ENCODE measurements at regions of chr1 and their contacts with region 1.

Region 1: GRCh38 chr1:93692983-93693591 is 11.4 kb upstream of the BCAR3 start:
- DNase-seq: peak; percentile 78
- H3K4me3 Mint-ChIP-seq: peak overlapping the region; percentile 1
- H3K27ac Mint-ChIP-seq: peak overlapping the region; percentile 70
- H3K4me1 Mint-ChIP-seq: peaks cover 14% of the 10 kb centered on the region
- H3K27me3 Mint-ChIP-seq: peaks cover 4% of the 10 kb centered on the region

Region 2: DNA sequence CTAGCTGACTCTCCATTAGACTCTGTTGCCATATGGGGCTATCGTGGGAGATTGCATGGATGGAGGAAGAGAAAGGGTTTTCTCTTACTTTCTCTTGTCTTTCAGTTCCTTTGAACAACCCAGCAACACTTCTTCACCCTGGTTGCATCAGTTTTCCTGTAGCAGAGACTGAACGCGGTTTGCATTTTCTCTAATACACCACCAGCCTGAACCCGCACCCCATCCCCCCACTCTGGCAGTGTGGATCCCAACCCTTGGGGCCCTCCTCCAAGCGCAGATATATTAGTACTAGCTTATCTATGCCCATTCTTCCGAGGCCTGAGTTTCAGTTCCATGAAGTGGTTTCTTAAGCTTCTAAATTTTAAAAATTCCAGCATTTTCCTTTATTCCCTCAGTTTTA is 334.8 kb before region 1 on chr1:
- CTCF ChIA-PET with region 1: no interaction called
- POLR2A ChIA-PET with region 1: no interaction called
- intact Hi-C with region 1: no loop called
- DNase-seq: no peak
- H3K4me3 Mint-ChIP-seq: no peak overlapping the region
- H3K27ac Mint-ChIP-seq: peak overlapping the region; percentile 30
- H3K4me1 Mint-ChIP-seq: peaks cover 58% of the 10 kb centered on the region
- H3K27me3 Mint-ChIP-seq: no peaks in the 10 kb centered on the region

Region 3: DNA sequence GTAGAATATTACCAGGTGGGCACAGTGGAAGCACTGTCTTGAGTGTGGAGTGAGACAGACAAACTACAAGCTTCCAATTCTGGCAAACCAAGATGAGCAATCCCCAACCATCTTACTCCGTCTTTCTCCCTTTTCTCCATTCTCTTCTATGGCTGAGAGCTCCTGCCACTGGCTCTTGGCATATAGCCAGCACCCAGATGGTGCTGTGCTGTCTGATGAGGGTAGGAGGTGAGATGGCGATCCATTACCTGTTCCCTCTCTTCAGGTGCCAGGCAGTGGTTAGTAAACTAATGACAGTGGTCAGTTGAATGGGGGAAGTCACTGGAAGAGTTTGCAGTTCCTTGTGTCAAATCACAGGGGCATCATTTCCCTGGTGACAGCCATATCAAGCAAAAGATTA is 136.8 kb before region 1 on chr1:
- CTCF ChIA-PET with region 1: no interaction called
- POLR2A ChIA-PET with region 1: no interaction called
- intact Hi-C with region 1: no loop called
- DNase-seq: no peak
- H3K4me3 Mint-ChIP-seq: no peak overlapping the region
- H3K27ac Mint-ChIP-seq: no peak overlapping the region
- H3K4me1 Mint-ChIP-seq: peaks cover 7% of the 10 kb centered on the region
- H3K27me3 Mint-ChIP-seq: peaks cover 4% of the 10 kb centered on the region

Region 4: GRCh38 chr1:93607814-93608186 is 85.3 kb before region 1 on chr1:
- CTCF ChIA-PET with region 1: no interaction called
- POLR2A ChIA-PET with region 1: interaction called, 3 read pairs
- intact Hi-C with region 1: loop called (anchors 1 kb)
- DNase-seq: peak; percentile 85
- H3K4me3 Mint-ChIP-seq: no peak overlapping the region
- H3K27ac Mint-ChIP-seq: peak overlapping the region; percentile 43
- H3K4me1 Mint-ChIP-seq: peaks cover 39% of the 10 kb centered on the region
- H3K27me3 Mint-ChIP-seq: peaks cover 21% of the 10 kb centered on the region

Region 5: GRCh38 chr1:93638981-93639380 is 54.1 kb before region 1 on chr1:
- CTCF ChIA-PET with region 1: no interaction called
- POLR2A ChIA-PET with region 1: interaction called, 3 read pairs
- intact Hi-C with region 1: loop called (anchors 1 kb)
- DNase-seq: no peak
- H3K4me3 Mint-ChIP-seq: no peak overlapping the region
- H3K27ac Mint-ChIP-seq: no peak overlapping the region
- H3K4me1 Mint-ChIP-seq: peaks cover 19% of the 10 kb centered on the region
- H3K27me3 Mint-ChIP-seq: no peaks in the 10 kb centered on the region

Region 6: GRCh38 chr1:93708734-93709481 is 15.8 kb after region 1 on chr1:
- CTCF ChIA-PET with region 1: interaction called, 3 read pairs
- POLR2A ChIA-PET with region 1: no interaction called
- intact Hi-C with region 1: loop called (anchors 1 kb)
- DNase-seq: peak; percentile 31
- H3K4me3 Mint-ChIP-seq: no peak overlapping the region
- H3K27ac Mint-ChIP-seq: no peak overlapping the region
- H3K4me1 Mint-ChIP-seq: peaks cover 40% of the 10 kb centered on the region
- H3K27me3 Mint-ChIP-seq: peaks cover 14% of the 10 kb centered on the region

Region 7: DNA sequence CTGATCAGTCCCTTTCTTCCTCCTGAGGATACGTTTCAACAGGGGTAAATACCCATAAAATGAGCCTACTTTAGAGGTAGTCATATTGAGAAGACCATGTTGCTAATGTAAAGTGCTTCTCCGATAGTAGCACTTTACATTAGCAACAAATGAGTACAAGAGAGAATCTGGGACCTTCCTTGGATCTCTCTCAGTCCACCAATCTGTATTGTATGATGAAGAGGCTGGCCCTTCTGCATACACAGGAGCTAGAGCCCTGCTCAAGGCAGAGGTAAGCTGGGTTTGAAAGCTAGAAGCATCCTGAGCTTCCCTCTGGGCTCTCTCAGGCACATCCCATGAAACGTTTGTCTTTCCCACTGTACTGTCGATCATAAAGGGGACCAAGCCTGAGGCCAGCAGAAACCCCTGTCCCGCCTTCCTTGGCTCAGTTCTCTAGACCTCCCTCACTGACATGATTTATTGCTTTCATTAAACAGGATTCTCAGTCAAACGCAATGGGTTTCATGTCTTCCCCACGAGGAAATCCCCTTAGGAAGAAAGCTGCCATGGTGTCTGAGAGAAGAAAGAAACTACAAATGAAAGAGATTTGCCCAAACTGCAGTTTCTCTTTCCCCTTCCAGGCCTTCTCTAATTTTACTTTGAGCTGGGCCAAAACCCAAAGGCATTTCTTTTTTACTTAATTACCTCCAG is 51.4 kb after region 1 on chr1:
- CTCF ChIA-PET with region 1: no interaction called
- POLR2A ChIA-PET with region 1: no interaction called
- intact Hi-C with region 1: loop called (anchors 2 kb)
- DNase-seq: no peak
- H3K4me3 Mint-ChIP-seq: no peak overlapping the region
- H3K27ac Mint-ChIP-seq: no peak overlapping the region
- H3K4me1 Mint-ChIP-seq: peaks cover 12% of the 10 kb centered on the region
- H3K27me3 Mint-ChIP-seq: peaks cover 8% of the 10 kb centered on the region

Region 8: DNA sequence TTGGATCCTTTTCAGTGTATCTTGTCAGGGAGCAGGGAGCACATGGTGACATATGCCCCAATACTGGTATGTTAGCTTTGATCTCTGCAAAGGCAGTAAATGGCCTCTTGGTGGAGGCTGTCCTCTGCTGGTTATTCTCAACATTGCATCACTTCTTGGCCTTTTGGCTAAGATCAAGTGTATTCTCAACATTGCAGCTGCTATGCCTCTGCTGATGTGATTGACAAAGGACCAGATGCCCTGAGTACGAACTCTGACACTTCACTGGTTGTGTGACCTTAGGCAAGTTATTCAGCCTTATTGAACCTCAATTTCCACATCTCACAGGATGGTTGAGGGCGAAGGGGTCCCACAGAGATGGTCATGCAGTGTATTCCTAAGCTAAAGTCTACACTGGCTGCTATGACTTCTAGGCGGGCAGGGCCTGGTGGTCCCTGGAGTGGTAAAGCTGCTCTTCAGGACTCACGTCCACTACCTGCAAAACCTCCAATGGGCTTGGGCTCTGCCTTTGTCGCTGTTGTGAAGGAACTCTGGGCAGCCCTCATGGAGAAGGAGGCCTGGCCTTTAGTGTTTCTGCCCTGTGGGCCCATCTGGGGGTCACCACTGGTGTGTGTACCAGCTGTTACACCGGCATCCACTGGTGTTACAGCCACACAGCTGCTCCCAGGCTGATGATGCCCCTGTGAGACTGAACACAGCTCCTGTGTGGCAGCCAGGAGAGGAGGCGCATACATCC is 121.1 kb after region 1 on chr1:
- CTCF ChIA-PET with region 1: interaction called, 6 read pairs
- POLR2A ChIA-PET with region 1: no interaction called
- intact Hi-C with region 1: loop called (anchors 5 kb)
- DNase-seq: peak; percentile 64
- H3K4me3 Mint-ChIP-seq: no peak overlapping the region
- H3K27ac Mint-ChIP-seq: no peak overlapping the region
- H3K4me1 Mint-ChIP-seq: peaks cover 21% of the 10 kb centered on the region
- H3K27me3 Mint-ChIP-seq: no peaks in the 10 kb centered on the region

Measured in activated CD4-positive, alpha-beta memory T cell treated with anti-CD3 and anti-CD28 coated beads for 36 hours (primary cell).